Transverse colon (tissue), 4 donors: ENCODE measurements at regions of chr1 and their contacts with region 1.

Region 1: DNA sequence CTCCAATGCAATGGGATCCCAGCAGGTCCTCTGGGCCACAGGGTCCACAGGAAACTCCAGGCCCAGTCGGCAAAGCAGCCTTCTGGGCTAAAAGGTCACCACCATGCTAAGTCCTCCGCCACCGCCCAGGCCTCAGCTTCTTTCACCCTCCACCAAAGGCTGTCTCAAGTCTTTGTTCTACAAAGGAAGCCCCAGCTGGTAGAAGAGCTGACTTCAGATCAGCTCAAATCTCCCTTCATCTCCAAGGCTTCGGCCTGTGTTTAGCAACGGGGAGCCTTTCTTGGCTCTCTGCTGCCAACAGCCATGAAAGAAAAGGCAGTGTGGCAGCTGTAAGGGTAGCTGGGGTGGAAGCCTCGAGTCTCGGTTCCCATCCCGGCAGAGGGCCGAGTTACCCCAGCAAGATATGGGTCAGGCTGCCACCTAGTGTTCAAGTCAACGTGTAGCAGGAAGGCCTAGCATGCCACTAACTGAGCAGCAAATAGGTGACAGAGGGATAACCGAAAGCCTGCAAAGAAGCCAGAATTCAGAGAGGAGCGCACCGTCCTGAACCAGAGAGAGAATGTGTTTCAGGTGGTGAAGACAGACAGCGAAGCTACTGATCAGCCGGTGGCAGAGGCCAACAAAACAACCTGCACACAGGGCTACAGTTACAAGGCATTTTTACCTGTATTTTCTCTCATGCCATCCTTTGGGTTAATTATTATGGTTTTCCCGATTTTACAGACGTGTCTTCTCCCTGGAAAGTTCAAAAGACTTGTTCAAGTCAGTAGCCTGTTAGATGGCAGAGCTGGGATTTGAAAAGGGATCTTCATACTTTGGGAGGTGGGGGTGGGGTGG is 26.8 kb upstream of the CRNN start:
- DNase-seq: peak; percentile 67
- H3K4me3 ChIP-seq: no peak overlapping the region
- H3K27ac ChIP-seq: no peak overlapping the region
- H3K4me1 ChIP-seq: peaks cover 0 to 4% (median 0%) of the 10 kb centered on the region in 4 donors
- H3K27me3 ChIP-seq: no peaks in the 10 kb centered on the region
- CTCF ChIP-seq: peak; percentile 62 to 78 (median 74)
- EP300 ChIP-seq: no peak
- POLR2A ChIP-seq: no peak

Region 2: GRCh38 chr1:152052606-152053005 is 388.2 kb before region 1 on chr1:
- in situ Hi-C with region 1: loop called in 1 of 4 experiments (anchors 10 kb)
- intact Hi-C with region 1: no loop called
- DNase-seq: peak; percentile 88
- H3K4me3 ChIP-seq: no peak overlapping the region
- H3K27ac ChIP-seq: no peak overlapping the region
- H3K4me1 ChIP-seq: peaks cover 11 to 14% (median 13%) of the 10 kb centered on the region in 4 donors
- H3K27me3 ChIP-seq: peaks cover 45% of the 10 kb centered on the region
- CTCF ChIP-seq: peak; percentile 89 to 93 (median 91)
- EP300 ChIP-seq: no peak
- POLR2A ChIP-seq: no peak

Region 3: GRCh38 chr1:152621993-152622392 is 181.1 kb after region 1 on chr1:
- in situ Hi-C with region 1: no loop called
- intact Hi-C with region 1: no loop called
- DNase-seq: no peak
- H3K4me3 ChIP-seq: no peak overlapping the region
- H3K27ac ChIP-seq: no peak overlapping the region
- H3K4me1 ChIP-seq: no peaks in the 10 kb centered on the region
- H3K27me3 ChIP-seq: no peaks in the 10 kb centered on the region
- CTCF ChIP-seq: no peak
- EP300 ChIP-seq: no peak
- POLR2A ChIP-seq: no peak

Region 4: DNA sequence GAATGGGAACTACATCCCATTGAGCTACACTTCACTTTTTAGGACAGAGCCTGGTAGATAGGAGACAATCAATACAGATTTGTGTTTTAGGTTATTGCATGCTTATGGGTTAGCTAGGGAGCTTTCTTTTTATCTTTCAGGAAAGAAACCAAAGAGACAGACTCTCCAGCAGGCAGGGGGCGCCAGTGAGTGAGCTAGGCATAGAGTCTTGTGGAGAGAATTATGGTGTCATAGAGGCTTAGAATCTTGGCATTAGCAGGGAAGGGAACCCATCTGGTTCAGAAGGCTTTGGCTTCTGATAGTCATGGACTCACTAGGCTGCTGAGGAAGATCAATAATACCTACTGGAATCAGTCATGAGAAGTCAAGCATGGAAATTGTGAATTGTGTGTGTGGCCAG is 437.2 kb after region 1 on chr1 and contains the start of gene SMCP:
- in situ Hi-C with region 1: no loop called
- intact Hi-C with region 1: no loop called
- DNase-seq: no peak
- H3K4me3 ChIP-seq: no peak within 1 kb of the TSS
- H3K27ac ChIP-seq: no peak within 1 kb of the TSS
- H3K4me1 ChIP-seq: no peaks in the 10 kb centered on the region
- H3K27me3 ChIP-seq: no peaks in the 10 kb centered on the region
- CTCF ChIP-seq: no peak
- EP300 ChIP-seq: no peak
- POLR2A ChIP-seq: no peak
- total RNA-seq, gene SMCP: not detected